Posterior cingulate gyrus (tissue), 11 donors: ENCODE measurements at regions of chr13 and their contacts with region 1.

Region 1: DNA sequence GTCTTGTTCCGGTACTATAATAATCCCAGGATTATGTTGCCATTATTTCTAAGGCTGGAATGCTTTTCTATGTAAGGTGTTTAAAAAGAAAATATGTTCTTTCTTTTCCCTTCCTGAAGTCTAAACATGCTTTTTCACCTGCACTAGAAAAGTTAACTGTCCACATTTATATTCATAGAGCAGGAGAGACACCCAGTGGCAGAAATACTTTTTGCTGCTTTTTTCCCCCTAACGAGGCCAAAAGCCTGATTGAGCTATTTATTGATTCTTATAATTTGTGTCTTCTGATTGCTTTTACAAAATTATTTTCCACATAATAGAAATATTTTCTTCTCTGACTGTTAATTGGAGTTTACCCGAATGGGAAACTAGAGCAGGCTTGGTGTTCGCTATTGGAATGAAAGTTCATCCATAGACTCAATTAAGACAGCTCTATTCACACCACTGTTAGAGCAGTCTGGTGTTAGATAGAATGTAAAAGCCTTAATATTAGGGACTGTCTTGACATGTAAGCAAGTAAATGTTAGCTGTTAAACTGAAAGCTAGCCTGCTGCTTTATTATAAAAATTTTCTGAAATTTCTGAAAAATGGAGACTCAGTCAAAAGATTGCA is 15.8 kb downstream of the GPR180 start:
- DNase-seq: peak in 1 of 10 donors; percentile 21

Region 2: DNA sequence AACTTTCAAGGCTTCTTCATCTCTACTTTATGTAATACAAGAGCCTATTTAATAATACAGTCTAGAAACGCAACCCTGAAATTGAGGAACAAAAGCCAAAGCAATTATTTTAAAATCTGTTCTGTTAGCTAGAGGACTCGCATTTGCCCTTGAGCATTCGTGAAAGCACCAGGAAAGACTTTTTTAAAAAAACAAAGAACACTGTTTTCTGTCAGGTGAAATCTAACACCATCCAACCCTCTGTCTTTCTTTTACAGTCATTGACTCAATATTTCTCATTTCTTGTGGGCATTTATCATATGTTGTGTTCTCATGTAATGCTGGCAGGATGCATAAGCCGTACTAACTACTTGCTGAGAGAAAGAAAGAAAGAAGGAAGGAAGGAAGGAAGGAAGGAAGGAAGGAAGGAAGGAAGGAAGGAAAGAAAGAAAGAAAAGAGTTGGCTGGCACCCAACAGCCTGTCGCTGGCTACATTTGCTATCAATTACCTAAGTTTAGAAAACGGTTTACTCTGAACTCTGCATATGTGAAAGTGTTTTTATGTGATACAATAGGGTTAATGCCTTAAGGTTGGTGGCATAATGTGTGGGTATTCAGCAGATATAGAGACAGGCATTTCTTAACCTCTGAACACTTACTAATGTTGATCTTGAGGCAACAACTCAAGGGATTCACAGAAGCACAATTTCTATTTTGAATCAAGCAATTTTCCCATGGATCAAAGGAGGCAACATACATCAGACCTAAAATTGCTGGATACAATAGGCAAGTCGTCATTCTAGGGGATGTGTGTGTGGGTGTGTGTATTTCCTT is 583.5 kb before region 1 on chr13:
- intact Hi-C with region 1: no loop called
- DNase-seq: no peak

Region 3: GRCh38 chr13:94305463-94305862 is 312.0 kb before region 1 on chr13:
- intact Hi-C with region 1: no loop called
- DNase-seq: no peak

Region 4: GRCh38 chr13:94435604-94436226 is 181.8 kb before region 1 on chr13:
- intact Hi-C with region 1: loop called (anchors 1 kb)
- DNase-seq: no peak

Region 5: GRCh38 chr13:94480672-94481145 is 136.8 kb before region 1 on chr13:
- intact Hi-C with region 1: no loop called
- DNase-seq: no peak